Naive thymus-derived CD4-positive, alpha-beta T cell (primary cell): ENCODE measurements at regions of chr1 and their contacts with region 1.

Region 1: DNA sequence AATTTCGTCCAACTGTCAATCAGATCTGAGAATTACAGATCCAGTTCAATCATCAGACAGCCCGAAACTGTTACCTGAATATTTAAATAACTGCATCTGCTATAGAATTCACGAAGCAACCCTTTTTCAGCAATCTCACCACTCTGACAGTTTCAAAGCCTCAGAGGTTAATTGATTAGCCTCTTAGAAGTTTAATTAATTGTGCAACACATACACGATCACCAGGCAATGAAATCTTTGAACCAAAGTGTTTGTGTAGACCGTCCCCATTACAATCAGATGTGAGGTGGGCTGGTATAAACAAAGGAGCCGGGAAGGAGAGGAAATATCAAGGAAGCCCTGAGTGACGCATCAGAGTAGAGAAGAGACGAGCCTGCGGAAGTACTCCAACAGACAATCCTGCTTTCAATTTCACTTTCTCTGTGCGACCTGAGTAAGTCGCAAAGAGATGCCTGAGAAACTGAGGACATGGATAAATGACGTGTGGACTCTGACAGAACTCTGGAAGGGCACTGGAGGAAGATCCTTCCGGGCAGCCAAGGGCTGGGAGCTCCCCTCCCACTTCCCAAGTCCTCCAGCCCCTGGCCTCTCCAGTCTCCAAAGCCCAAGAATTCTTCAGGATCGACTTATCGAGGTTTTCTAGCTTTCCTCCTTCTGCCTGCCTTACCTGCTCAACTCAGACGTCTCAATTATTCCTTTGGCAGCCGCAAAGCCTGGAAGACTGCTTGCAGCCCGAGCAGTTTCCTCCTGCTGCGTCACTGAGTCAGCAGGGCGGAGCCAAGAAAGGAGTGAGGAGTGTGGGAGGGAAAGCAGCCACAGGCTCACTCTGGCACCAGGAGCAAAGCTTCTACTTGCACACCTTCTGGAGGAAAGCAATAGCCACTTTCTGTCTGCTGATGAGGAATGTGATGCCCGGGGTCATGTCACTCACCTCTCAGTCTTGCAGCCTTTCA is at the start of gene RNASEL:
- DNase-seq: peak; percentile 24 to 72 (median 65)
- ATAC-seq: peak; percentile 89
- H3K4me3 ChIP-seq: peak within 1 kb of the TSS; percentile 92
- H3K4me3 Mint-ChIP-seq: peak within 1 kb of the TSS; percentile 93 to 99 (median 98)
- H3K27ac ChIP-seq: peak within 1 kb of the TSS; percentile 97
- H3K27ac Mint-ChIP-seq: peak within 1 kb of the TSS; percentile 97 to 100 (median 99)
- H3K4me1 ChIP-seq: peaks cover 23 to 27% of the 10 kb centered on the region in 2 donors
- H3K4me1 Mint-ChIP-seq: peaks cover 31 to 60% (median 51%) of the 10 kb centered on the region in 7 donors
- H3K27me3 ChIP-seq: no peaks in the 10 kb centered on the region
- H3K27me3 Mint-ChIP-seq: peaks cover 0 to 9% (median 0%) of the 10 kb centered on the region in 5 donors
- total RNA-seq, gene RNASEL: 5.7 to 34.9 (median 12.1) TPM

Region 2: GRCh38 chr1:182446033-182446669 is 142.6 kb before region 1 on chr1:
- CTCF ChIA-PET with region 1: no interaction called
- POLR2A ChIA-PET with region 1: no interaction called
- intact Hi-C with region 1: loop called in 1 of 2 experiments (anchors 1 kb)
- DNase-seq: peak in 3 of 9 donors; percentile 12 to 21 (median 13)
- ATAC-seq: peak; percentile 77
- H3K4me3 ChIP-seq: no peak overlapping the region
- H3K4me3 Mint-ChIP-seq: no peak overlapping the region
- H3K27ac ChIP-seq: no peak overlapping the region
- H3K27ac Mint-ChIP-seq: no peak overlapping the region
- H3K4me1 ChIP-seq: no peaks in the 10 kb centered on the region
- H3K4me1 Mint-ChIP-seq: peaks cover 0 to 6% (median 5%) of the 10 kb centered on the region in 7 donors
- H3K27me3 ChIP-seq: no peaks in the 10 kb centered on the region
- H3K27me3 Mint-ChIP-seq: peaks cover 0 to 6% (median 0%) of the 10 kb centered on the region in 5 donors

Region 3: DNA sequence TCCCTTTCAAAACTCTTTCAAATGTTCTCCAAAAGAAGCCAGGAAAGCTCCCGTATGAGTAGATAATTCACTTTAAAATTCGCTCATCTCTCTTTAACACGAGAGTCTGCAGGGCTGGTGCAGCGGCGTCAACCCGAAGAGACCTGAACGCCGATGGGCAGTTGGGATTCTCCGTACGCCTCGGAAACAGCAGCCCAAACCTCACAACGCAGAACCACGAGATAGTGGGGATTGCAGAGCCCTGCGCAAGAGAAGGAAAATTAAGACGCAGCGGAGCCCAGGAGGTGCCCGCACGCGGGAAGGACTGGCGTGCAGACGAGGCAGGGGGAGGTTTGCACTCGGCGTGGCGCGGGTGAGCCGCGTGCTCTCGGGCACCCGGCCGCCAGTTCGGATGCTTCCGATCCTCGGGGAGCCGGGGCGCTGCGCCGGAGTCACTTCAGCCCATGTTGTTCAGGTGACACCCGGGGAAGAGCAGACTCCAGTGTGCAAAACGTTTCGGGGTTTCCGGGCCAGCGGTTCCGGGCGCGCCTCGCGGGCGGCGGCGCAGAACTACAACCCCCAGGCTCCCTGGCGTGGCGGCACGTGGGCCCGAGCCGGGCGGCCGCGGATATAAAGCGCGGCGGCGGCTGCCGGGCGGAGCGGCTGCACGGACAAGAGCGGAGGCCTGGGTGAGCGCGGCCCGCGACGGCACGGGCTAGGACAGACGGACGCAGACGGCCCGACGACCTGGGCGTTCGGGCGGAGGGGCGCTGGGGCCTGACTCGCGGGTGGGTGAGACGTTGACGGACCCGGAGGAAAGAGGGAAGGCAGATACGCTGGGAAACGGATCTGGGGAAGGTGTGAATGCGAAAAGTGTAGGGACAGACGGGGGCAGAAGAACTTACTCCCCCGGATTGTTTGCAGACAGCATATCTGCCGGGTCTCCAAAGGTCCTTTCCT is 200.6 kb after region 1 on chr1 and contains the start of gene NPL:
- CTCF ChIA-PET with region 1: interaction called, 403 read pairs
- POLR2A ChIA-PET with region 1: interaction called, 32 read pairs
- intact Hi-C with region 1: loop called (anchors 2 kb)
- DNase-seq: peak; percentile 78 to 88 (median 86)
- ATAC-seq: peak; percentile 97
- H3K4me3 ChIP-seq: peak within 1 kb of the TSS; percentile 94
- H3K4me3 Mint-ChIP-seq: peak within 1 kb of the TSS; percentile 88 to 96 (median 94)
- H3K27ac ChIP-seq: peak within 1 kb of the TSS; percentile 68
- H3K27ac Mint-ChIP-seq: peak within 1 kb of the TSS; percentile 45 to 94 (median 87)
- H3K4me1 ChIP-seq: peaks cover 8 to 13% of the 10 kb centered on the region in 2 donors
- H3K4me1 Mint-ChIP-seq: peaks cover 8 to 18% (median 15%) of the 10 kb centered on the region in 7 donors
- H3K27me3 ChIP-seq: no peaks in the 10 kb centered on the region
- H3K27me3 Mint-ChIP-seq: peaks cover 0 to 38% (median 0%) of the 10 kb centered on the region in 5 donors
- total RNA-seq, gene NPL: 3.0 to 20.8 (median 9.9) TPM

Region 4: DNA sequence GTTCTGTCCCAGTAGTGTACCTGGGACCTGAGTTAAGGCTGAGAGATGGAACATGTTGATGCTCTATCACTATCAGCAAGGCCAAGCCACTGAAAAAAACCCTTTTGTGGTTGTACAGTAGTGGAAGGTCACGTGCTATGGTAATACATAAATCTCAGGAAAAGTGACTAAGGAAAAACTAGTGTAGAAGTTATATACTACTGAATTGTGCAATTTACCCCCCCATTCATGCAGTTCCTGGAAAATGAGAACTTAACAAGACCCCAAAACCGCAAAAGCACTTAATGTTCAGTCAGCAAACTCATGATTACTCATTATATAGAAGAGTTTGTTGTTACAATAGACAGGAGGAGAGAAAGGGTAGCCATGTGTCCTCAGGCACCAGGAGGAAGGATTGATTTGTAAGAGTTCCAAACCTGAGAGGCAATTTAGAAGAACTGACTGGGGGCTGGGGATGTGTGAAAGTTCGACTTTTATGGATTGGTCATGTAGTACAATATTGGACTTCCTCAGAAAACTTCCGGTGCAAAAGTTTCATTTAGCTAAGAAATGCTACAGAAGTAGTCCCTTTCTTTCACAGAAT is 1307.8 kb after region 1 on chr1:
- CTCF ChIA-PET with region 1: no interaction called
- POLR2A ChIA-PET with region 1: no interaction called
- intact Hi-C with region 1: loop called in 1 of 2 experiments (anchors 5 kb)
- DNase-seq: no peak
- ATAC-seq: peak; percentile 60
- H3K4me3 ChIP-seq: no peak overlapping the region
- H3K4me3 Mint-ChIP-seq: no peak overlapping the region
- H3K27ac ChIP-seq: no peak overlapping the region
- H3K27ac Mint-ChIP-seq: peak overlapping the region in 1 of 9 donors; percentile 19
- H3K4me1 ChIP-seq: no peaks in the 10 kb centered on the region
- H3K4me1 Mint-ChIP-seq: peaks cover 6 to 13% (median 11%) of the 10 kb centered on the region in 7 donors
- H3K27me3 ChIP-seq: no peaks in the 10 kb centered on the region
- H3K27me3 Mint-ChIP-seq: no peaks in the 10 kb centered on the region